PC-3 (cell line): ENCODE measurements at regions of chr17 and their contacts with region 1.

Region 1: GRCh38 chr17:59859444-59860025 is 33.2 kb downstream of the TUBD1 start:
- DNase-seq: peak; percentile 85
- ATAC-seq: peak; percentile 47
- H3K4me3 ChIP-seq: no peak overlapping the region
- H3K27ac ChIP-seq: peak overlapping the region; percentile 92
- H3K4me1 ChIP-seq: peaks cover 43% of the 10 kb centered on the region
- H3K27me3 ChIP-seq: no peaks in the 10 kb centered on the region
- CTCF ChIP-seq: peak; percentile 94

Region 2: GRCh38 chr17:59521204-59522126 is 338.1 kb before region 1 on chr17:
- CTCF ChIA-PET with region 1: no interaction called
- POLR2A ChIA-PET with region 1: no interaction called
- intact Hi-C with region 1: loop called (anchors 2 kb)
- DNase-seq: peak; percentile 81
- ATAC-seq: peak; percentile 97
- H3K4me3 ChIP-seq: no peak overlapping the region
- H3K27ac ChIP-seq: no peak overlapping the region
- H3K4me1 ChIP-seq: peaks cover 4% of the 10 kb centered on the region; the same call in 1 of the 2 replicates
- H3K27me3 ChIP-seq: no peaks in the 10 kb centered on the region
- CTCF ChIP-seq: peak; percentile 95

Region 3: GRCh38 chr17:59746849-59747445 is 112.6 kb before region 1 on chr17:
- CTCF ChIA-PET with region 1: interaction called, 61 read pairs
- POLR2A ChIA-PET with region 1: no interaction called
- intact Hi-C with region 1: loop called (anchors 1 kb)
- DNase-seq: peak; percentile 77
- ATAC-seq: peak; percentile 82
- H3K4me3 ChIP-seq: no peak overlapping the region
- H3K27ac ChIP-seq: no peak overlapping the region
- H3K4me1 ChIP-seq: no peaks in the 10 kb centered on the region
- H3K27me3 ChIP-seq: no peaks in the 10 kb centered on the region
- CTCF ChIP-seq: peak; percentile 94

Region 4: DNA sequence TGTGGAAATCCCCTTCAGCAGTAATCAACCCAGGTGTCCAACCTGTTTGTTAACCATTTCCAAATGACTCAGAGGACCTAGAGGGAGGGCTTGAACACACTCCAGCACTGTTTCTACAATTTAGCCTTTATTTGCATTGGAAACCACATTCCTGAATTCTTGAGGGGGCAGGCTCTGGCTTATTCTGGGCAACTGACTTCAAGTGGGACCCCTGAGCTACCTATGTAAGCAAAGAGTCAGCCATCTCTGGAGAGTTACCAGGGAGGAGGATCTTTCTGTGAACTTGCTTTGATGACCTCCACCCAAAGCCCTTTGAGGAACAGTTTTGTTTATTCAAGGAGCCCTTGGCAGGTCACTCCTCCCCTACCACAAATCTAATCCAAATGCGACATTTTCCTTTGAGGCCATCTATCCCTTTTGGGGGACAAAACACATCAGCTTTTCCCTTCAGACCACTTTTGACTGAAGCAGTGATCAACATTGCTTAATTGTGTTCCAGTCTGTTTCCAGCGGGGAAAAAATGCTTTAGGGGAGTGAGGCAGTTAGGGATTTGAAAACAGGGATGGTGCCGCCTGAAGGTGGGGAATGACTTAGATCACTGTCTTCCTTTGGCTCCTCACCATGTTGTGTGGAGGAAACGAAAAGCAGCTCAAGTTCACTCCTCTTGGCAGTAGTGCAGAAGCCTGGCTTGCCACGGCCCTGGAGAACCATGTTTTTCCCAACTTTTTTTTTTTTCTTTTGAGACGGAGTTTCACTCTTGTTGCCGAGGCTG is 13.0 kb before region 1 on chr17:
- CTCF ChIA-PET with region 1: interaction called, 48 read pairs
- POLR2A ChIA-PET with region 1: interaction called, 22 read pairs
- intact Hi-C with region 1: loop called (anchors 1 kb)
- DNase-seq: peak; percentile 99
- ATAC-seq: peak; percentile 32
- H3K4me3 ChIP-seq: peak overlapping the region; percentile 54; the same call in 1 of the 2 replicates
- H3K27ac ChIP-seq: peak overlapping the region; percentile 95
- H3K4me1 ChIP-seq: peaks cover 50% of the 10 kb centered on the region
- H3K27me3 ChIP-seq: no peaks in the 10 kb centered on the region
- CTCF ChIP-seq: no peak